ENCODE measurements at regions of chr3 and their contacts with region 1.

Region 1: GRCh38 chr3:12984023-12984823 is 89.0 kb downstream of the IQSEC1 start:
- DNase-seq: peak; percentile 76 to 89 (median 84)
- H3K4me3 ChIP-seq: no peak overlapping the region
- H3K27ac ChIP-seq: no peak overlapping the region
- H3K4me1 ChIP-seq: peaks cover 7 to 47% (median 31%) of the 10 kb centered on the region in 4 experiments
- H3K27me3 ChIP-seq: no peaks in the 10 kb centered on the region

Region 2: GRCh38 chr3:12868039-12869034 is 115.9 kb before region 1 on chr3:
- CTCF ChIA-PET with region 1: interaction called, 15 read pairs
- POLR2A ChIA-PET with region 1: interaction called, 3 read pairs
- DNase-seq: peak; percentile 58 to 83 (median 73)
- H3K4me3 ChIP-seq: peak overlapping the region; percentile 35 to 81 (median 55)
- H3K27ac ChIP-seq: no peak overlapping the region
- H3K4me1 ChIP-seq: peaks cover 0 to 19% (median 11%) of the 10 kb centered on the region in 4 experiments
- H3K27me3 ChIP-seq: peaks cover 0 to 5% (median 3%) of the 10 kb centered on the region in 5 experiments

Region 3: DNA sequence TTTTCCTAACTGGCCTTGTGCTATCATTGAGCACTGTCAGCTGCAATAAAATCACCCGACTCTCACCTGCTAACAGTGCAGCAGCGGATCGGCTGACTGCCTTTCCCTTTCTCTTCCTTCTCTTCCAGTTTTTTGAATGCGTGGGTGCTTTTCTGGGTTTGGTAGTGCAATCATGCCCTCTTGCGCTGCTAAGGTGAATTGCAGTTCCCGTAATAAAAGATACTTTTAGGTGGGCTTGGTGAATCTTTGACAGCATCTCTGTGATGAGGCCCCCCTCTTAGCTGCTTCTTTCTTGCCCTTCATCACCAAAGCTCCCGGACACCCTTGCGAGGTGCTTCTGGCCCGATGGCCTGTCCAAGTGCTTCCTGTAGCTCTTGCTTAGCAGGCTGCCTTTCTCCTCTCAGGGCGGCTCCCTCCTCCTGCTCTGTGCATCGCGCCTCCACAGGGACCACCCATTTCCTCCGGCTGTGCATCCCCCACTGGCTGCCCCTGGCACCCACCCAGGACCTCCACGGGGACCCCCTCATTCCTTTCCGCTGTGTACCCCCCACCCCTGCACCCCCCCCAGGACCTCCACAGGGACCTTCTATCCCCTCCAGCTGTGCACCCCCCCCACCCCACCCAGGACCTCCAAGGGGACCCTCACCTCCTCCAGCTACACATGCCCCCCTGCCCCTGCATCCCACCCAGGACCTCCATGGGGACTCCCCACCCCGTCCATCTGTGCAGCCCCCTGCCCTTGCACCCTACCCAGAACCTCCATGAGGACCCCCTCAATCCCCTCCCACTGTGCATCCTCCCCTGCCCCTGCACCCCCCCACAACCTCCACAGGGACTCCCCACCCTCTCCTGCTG is 92.0 kb before region 1 on chr3:
- CTCF ChIA-PET with region 1: interaction called, 37 read pairs
- POLR2A ChIA-PET with region 1: no interaction called
- DNase-seq: peak; percentile 61 to 79 (median 72)
- H3K4me3 ChIP-seq: peak overlapping the region in 2 of 7 experiments; percentile 13 to 51
- H3K27ac ChIP-seq: no peak overlapping the region
- H3K4me1 ChIP-seq: peaks cover 0 to 3% (median 1%) of the 10 kb centered on the region in 4 experiments
- H3K27me3 ChIP-seq: peaks cover 0 to 2% (median 0%) of the 10 kb centered on the region in 5 experiments

Region 4: GRCh38 chr3:12901623-12902045 is 82.6 kb before region 1 on chr3:
- CTCF ChIA-PET with region 1: interaction called, 37 read pairs
- POLR2A ChIA-PET with region 1: no interaction called
- DNase-seq: peak in 2 of 3 donors; percentile 26 to 36
- H3K4me3 ChIP-seq: no peak overlapping the region
- H3K27ac ChIP-seq: no peak overlapping the region
- H3K4me1 ChIP-seq: peaks cover 0 to 27% (median 24%) of the 10 kb centered on the region in 4 experiments
- H3K27me3 ChIP-seq: no peaks in the 10 kb centered on the region

Region 5: GRCh38 chr3:12967606-12968351 is 16.4 kb before region 1 on chr3:
- CTCF ChIA-PET with region 1: interaction called, 400 read pairs
- POLR2A ChIA-PET with region 1: interaction called, 3 read pairs
- DNase-seq: peak; percentile 85 to 93 (median 92)
- H3K4me3 ChIP-seq: peak overlapping the region; percentile 39 to 81 (median 67)
- H3K27ac ChIP-seq: no peak overlapping the region
- H3K4me1 ChIP-seq: peaks cover 3 to 53% (median 40%) of the 10 kb centered on the region in 4 experiments
- H3K27me3 ChIP-seq: no peaks in the 10 kb centered on the region

Region 6: DNA sequence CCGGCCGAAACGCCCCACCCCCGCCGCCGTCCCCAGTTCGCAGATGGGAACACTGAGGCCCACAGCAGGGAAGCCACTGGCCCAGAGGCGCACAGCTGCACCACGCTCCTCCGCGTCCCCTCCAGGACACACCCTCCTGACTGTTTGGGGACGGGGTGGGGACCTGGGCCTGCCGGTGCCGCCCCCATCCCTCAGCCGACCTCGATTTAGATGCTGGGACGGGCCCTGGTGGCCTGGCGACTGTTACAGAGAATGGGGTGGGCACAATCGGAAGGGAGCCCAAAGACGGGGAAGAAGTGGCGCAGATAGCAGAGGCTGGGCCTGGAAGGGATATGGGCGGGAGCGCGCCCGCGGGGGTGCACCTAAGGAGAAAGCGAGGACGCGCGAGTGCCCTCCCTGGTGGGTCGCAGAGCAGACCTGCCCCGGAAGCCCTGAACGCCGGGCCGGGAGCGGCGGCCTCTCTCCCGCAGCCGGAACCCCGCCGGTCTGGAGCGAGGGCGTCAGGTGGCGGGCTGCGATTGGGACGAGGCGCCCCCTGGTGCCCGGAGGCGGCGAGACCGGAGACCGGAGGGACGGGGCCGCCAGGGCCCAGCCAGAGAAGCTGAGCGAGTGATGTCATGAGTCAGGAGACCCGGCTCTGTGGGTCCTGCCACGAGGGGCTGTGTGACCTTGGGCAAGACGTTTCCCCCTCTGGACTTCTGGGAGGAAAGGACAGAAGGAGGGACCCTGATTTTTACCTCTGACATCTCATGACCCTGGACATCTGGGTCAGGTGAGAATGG is 10.6 kb after region 1 on chr3:
- CTCF ChIA-PET with region 1: interaction called, 33 read pairs
- POLR2A ChIA-PET with region 1: interaction called, 3 read pairs
- DNase-seq: peak; percentile 89 to 92 (median 89)
- H3K4me3 ChIP-seq: peak overlapping the region; percentile 40 to 83 (median 66)
- H3K27ac ChIP-seq: peak overlapping the region in 1 of 2 experiments; percentile 54
- H3K4me1 ChIP-seq: peaks cover 14 to 42% (median 35%) of the 10 kb centered on the region in 4 experiments
- H3K27me3 ChIP-seq: peaks cover 0 to 18% (median 3%) of the 10 kb centered on the region in 5 experiments

Measured in common myeloid progenitor, CD34-positive (primary cell).